PC-9 (cell line): ENCODE measurements at regions of chr2 and their contacts with region 1.

Region 1: DNA sequence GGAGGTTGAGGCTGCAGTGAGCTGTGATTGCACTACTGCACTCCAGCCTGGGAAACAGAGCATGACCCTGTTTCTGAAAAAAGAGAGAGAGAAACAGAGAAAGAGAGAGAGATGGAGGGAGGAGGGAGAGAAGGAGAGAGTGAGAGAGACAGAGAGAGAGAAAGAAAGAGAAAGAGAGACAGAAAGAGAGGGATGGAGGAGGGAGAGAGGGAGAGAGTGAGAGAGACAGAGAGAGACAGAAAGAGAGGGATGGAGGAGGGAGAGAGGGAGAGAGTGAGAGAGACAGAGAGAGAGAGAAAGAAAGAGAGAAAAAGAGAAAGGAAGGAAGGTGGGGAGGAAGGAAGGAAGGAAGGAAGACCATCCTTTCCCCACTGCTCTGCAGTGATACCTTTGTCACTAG is 48.1 kb upstream of the ACKR3 start:
- DNase-seq: no peak
- H3K4me3 ChIP-seq: no peak overlapping the region
- H3K27ac ChIP-seq: no peak overlapping the region
- H3K4me1 ChIP-seq: no peaks in the 10 kb centered on the region
- H3K27me3 ChIP-seq: peaks cover 51% of the 10 kb centered on the region
- CTCF ChIP-seq: no peak

Region 2: DNA sequence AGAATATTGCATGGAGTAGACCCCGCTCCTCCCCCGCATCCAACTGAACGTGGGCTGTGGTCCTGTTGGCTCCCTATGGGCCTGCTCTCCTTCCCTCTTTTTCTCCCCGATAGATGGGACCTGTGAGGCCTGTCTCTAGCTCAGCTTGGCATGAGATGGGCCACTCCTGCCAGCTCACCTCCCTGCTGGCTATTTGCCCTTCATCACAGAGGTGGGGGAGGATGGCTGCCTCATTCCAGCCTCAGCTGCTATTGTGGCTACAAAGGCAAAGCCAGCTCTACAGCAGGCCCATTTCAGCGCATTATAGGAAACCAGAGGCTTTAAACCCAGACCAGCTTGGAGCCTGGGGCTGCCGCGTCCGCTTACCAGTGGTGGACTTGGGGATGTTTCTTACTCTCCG is 667.3 kb before region 1 on chr2:
- CTCF ChIA-PET with region 1: no interaction called
- POLR2A ChIA-PET with region 1: no interaction called
- intact Hi-C with region 1: no loop called
- DNase-seq: no peak
- H3K4me3 ChIP-seq: no peak overlapping the region
- H3K27ac ChIP-seq: no peak overlapping the region
- H3K4me1 ChIP-seq: no peaks in the 10 kb centered on the region
- H3K27me3 ChIP-seq: no peaks in the 10 kb centered on the region
- CTCF ChIP-seq: no peak

Region 3: GRCh38 chr2:236763857-236764256 is 242.3 kb after region 1 on chr2:
- CTCF ChIA-PET with region 1: interaction called, 26 read pairs
- POLR2A ChIA-PET with region 1: no interaction called
- intact Hi-C with region 1: no loop called
- DNase-seq: peak in 1 of 2 experiments; percentile 17
- H3K4me3 ChIP-seq: no peak overlapping the region
- H3K27ac ChIP-seq: no peak overlapping the region
- H3K4me1 ChIP-seq: peaks cover 5% of the 10 kb centered on the region
- H3K27me3 ChIP-seq: no peaks in the 10 kb centered on the region
- CTCF ChIP-seq: no peak